ENCODE measurements at regions of chr17 and their contacts with region 1.

Region 1: DNA sequence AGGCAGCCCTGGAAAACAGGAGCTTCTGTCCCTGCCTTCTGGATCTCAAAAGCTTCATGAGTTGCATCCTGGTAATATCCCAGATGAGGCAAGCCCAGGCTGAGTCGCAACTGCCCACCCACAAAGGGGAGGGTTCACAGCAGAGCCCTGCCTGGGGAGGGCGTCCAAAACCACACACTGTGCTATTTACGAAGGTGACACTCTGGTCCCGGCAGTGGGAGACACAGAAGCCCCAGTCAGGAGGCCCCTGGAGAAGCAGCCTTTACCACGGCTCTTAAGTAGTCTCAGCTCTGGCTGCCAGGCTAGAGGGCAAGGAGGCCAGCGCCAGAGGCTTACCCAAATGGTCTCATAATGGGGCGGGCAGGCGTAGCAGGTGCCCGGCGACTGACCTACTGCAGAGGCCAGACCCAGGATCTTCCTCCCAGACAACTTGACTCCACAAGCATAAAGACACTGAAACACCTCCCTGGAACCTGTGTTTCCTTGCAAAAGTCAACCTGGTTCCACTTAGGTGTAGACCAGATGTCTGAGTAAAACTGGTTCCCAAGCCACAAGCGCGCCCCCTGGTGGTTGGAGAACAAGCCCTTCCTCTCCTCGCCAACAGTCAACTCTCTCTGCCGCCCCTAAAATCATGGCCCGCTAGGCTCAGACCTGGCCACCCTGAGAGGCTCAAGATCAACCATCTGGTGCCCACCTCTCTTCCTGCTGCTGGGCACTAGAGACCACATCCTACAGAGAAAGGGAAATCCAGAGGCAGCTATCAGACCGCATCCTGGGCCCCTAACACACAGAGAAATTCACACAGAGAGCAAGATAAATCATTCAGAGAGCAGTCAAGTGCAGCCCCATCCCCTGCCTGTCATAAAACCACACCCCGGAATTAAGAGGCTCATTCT is 5.2 kb downstream of the AXIN2 start:
- DNase-seq: peak; percentile 78
- H3K4me3 Mint-ChIP-seq: no peak overlapping the region
- H3K27ac Mint-ChIP-seq: no peak overlapping the region
- H3K4me1 Mint-ChIP-seq: no peaks in the 10 kb centered on the region
- H3K27me3 Mint-ChIP-seq: peaks cover 10% of the 10 kb centered on the region
- CTCF ChIP-seq: peak; percentile 84

Region 2: DNA sequence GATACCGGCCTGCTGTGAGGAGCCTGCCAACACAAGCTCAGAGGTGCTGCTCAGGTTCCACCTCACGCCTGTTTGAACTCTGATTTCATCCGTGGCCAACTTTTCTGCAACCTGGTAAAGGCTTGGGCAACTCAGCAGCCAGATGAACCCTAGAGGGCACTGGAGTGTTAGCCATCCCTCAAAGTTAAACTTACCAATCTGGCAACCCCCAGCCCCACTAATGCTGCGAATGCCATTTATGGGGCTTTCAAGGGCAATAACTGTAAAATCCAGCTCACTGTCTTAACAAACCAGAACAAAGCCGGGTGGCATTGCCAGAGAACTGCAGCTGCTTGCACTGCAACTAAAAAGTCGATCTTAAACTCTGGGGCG is 100.3 kb before region 1 on chr17:
- CTCF ChIA-PET with region 1: interaction called, 5 read pairs
- POLR2A ChIA-PET with region 1: no interaction called
- intact Hi-C with region 1: loop called (anchors 1 kb)
- DNase-seq: peak; percentile 30
- H3K4me3 Mint-ChIP-seq: no peak overlapping the region
- H3K27ac Mint-ChIP-seq: no peak overlapping the region
- H3K4me1 Mint-ChIP-seq: peaks cover 8% of the 10 kb centered on the region
- H3K27me3 Mint-ChIP-seq: no peaks in the 10 kb centered on the region
- CTCF ChIP-seq: no peak

Region 3: DNA sequence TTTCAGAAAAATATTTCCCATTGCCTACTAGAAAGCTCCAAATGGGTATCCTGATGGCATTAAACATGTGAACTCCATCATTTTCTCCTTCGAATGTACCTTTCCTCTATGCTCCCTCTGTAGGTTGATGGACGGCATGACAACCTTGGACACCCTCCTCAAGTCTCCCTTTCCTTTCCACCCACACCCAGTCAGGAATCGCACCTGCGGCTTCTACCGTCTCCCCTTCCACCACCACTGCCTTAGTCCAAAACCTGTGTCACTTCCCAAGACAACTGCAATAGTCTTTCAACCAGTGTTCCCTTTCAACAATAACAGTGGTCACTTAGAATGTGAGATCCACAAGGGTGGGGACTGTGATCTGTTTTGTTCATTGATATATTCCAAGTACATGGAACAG is 238.3 kb after region 1 on chr17:
- CTCF ChIA-PET with region 1: no interaction called
- POLR2A ChIA-PET with region 1: interaction called, 3 read pairs
- intact Hi-C with region 1: loop called (anchors 2 kb)
- DNase-seq: peak; percentile 65
- H3K4me3 Mint-ChIP-seq: no peak overlapping the region
- H3K27ac Mint-ChIP-seq: no peak overlapping the region
- H3K4me1 Mint-ChIP-seq: no peaks in the 10 kb centered on the region
- H3K27me3 Mint-ChIP-seq: no peaks in the 10 kb centered on the region
- CTCF ChIP-seq: peak; percentile 64